Activated CD8-positive, alpha-beta T cell treated with anti-CD3 and anti-CD28 coated beads for 36 hours (primary cell): ENCODE measurements at regions of chr3 and their contacts with region 1.

Region 1: DNA sequence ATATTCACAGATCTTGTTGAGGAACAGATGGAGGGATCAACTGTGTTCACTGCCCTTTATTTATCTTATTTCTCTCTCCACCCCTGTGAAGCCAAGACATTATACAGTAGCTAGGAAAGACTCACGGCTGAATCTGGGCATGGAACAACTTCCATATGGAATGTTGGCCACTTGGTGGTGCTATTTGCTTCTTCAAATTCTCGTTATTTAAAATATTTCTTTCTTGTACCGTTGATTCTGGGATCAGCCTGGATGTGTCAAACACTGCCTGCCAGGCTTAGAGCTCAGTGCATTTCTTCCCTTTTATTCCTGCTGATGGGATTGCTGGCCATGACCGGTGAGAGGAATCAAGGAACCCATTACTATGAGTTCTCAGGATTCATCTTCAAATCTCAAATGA is 17.5 kb upstream of the GASK1A start:
- DNase-seq: peak; percentile 45
- ATAC-seq: no peak
- H3K4me3 Mint-ChIP-seq: no peak overlapping the region
- H3K27ac Mint-ChIP-seq: no peak overlapping the region
- H3K4me1 Mint-ChIP-seq: peaks cover 19% of the 10 kb centered on the region
- H3K27me3 Mint-ChIP-seq: no peaks in the 10 kb centered on the region
- CTCF ChIP-seq: peak; percentile 70

Region 2: DNA sequence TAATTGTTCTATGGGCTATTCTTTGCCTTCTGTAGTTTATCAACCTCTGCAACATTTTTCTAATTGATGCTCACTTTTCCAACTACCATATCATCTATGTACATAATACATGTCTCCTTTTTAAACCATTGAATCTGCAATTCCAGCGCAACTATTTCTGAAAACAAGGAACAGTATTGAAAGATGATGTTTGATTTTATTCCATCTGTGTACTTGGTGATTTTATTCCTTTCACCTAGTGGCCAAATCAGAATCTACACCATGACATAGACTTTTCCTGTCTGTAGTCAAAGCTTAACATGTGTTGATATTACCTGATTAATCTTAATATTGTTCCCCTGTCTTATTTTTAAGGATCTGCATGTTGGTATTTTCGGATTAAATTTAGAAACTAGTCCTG is 348.2 kb before region 1 on chr3:
- CTCF ChIA-PET with region 1: no interaction called
- POLR2A ChIA-PET with region 1: no interaction called
- intact Hi-C with region 1: no loop called
- DNase-seq: no peak
- ATAC-seq: no peak
- H3K4me3 Mint-ChIP-seq: no peak overlapping the region
- H3K27ac Mint-ChIP-seq: peak overlapping the region; percentile 8
- H3K4me1 Mint-ChIP-seq: peaks cover 55% of the 10 kb centered on the region
- H3K27me3 Mint-ChIP-seq: no peaks in the 10 kb centered on the region
- CTCF ChIP-seq: peak; percentile 30

Region 3: DNA sequence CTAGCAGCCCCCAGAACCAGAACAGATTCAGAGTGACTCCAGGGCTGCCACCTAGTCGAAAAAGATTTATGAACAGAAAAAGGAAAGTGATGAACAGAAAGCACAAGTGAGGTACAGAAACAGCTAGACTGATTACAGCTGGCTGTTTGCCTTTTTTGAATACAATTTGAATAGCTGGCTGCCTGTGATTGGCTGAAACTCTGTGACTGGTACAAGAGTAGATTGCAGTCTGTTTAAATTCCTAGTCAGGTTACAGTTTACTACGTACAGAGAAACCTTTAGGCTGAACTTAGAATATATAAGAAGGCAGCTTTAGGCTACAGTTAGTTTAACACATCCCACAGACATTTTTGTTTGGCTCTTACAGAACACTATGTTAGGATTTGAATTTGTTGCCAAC is 198.6 kb before region 1 on chr3:
- CTCF ChIA-PET with region 1: no interaction called
- POLR2A ChIA-PET with region 1: no interaction called
- intact Hi-C with region 1: no loop called
- DNase-seq: no peak
- ATAC-seq: peak; percentile 27
- H3K4me3 Mint-ChIP-seq: no peak overlapping the region
- H3K27ac Mint-ChIP-seq: no peak overlapping the region
- H3K4me1 Mint-ChIP-seq: no peaks in the 10 kb centered on the region
- H3K27me3 Mint-ChIP-seq: peaks cover 2% of the 10 kb centered on the region
- CTCF ChIP-seq: no peak

Region 4: GRCh38 chr3:42778644-42779043 is 183.0 kb before region 1 on chr3:
- CTCF ChIA-PET with region 1: no interaction called
- POLR2A ChIA-PET with region 1: no interaction called
- intact Hi-C with region 1: no loop called
- DNase-seq: no peak
- ATAC-seq: no peak
- H3K4me3 Mint-ChIP-seq: no peak overlapping the region
- H3K27ac Mint-ChIP-seq: no peak overlapping the region
- H3K4me1 Mint-ChIP-seq: no peaks in the 10 kb centered on the region
- H3K27me3 Mint-ChIP-seq: no peaks in the 10 kb centered on the region
- CTCF ChIP-seq: no peak

Region 5: DNA sequence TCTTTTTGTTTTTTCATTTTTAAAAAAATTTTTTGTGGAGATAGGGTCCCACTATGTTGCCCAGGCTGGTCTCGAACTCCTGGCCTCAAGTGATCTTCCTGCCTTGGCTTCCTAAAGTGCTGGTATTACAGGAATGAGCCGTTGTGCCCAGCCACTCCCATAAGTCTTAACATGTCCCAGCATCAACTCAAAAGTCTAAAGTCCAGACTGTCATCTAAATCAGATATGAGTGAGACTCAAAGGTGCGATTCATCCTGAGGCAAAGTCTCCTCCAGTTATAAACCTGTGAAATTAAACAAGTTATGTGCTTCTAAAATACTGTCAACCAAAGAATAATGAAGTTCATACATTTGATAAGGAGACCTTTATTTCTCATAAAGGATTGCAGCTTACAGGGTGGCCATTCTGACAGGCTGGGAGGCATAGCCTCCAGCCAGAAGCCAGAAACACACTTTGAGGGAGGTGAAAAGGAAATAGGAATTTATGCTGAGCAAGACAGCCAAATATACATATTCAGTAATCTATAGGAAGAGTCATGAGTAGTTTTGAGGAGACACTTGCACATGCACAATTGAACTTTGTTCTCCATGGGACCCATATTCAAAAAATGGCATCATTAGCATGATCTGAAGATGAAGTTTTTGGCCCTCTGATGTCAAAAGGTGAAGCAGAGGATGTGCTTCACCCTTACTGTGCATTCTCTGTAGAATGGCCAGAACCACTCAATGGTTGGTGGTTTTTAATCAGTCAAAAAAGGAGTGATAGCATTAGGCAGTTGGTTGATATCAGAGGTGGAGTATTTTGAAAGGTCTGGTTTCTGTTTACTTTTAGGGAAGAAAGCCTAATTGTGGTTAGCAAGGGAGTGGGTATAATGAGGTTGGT is 66.7 kb before region 1 on chr3:
- CTCF ChIA-PET with region 1: no interaction called
- POLR2A ChIA-PET with region 1: no interaction called
- intact Hi-C with region 1: no loop called
- DNase-seq: no peak
- ATAC-seq: peak; percentile 37
- H3K4me3 Mint-ChIP-seq: no peak overlapping the region
- H3K27ac Mint-ChIP-seq: no peak overlapping the region
- H3K4me1 Mint-ChIP-seq: peaks cover 5% of the 10 kb centered on the region
- H3K27me3 Mint-ChIP-seq: peaks cover 4% of the 10 kb centered on the region
- CTCF ChIP-seq: no peak

Region 6: DNA sequence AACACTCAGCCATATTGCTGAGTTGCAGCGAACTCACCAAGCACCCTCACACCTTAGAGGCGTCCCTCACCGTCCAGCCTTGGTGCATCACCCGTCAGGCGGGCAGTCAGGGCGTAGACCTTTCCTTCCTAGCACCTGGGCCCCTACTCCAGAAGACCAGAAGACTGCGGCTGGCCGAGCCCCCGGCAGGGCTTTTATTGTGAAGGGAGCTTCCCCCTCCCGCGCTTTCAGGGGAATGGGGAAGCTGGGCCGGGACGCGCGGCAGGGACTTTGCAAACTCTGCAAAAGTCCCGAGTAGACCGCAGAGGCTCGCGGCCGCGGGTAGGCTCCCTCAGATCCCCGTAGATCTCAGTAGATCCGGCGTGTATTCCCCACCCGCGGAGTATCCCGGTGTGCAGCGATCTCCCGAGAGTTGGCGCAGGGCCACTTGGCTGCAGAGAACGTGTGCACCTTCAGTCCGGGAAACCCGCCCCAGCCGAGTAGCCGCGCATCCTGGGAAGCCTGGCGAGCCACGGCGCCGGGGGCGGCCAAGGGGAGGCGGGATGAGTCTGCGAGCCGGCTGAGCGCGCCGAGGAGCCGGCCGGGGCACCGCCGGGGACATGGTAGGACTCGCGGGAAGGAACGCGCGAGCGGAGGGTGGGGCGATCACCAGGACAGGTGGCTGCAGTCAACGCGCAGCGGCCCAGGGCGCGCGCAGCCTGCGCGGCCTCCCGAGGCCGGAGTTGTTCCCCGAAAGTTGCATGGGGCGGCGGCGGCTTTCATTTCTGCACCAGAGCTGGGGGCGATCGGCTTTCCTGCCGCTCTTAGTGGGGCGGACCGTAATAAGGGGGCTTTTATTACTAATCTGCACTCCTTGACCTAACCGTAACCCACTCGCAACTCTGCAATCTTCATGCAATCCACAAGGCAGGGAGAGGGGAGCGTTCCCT is 17.7 kb after region 1 on chr3 and contains the start of gene GASK1A:
- CTCF ChIA-PET with region 1: interaction called, 26 read pairs
- POLR2A ChIA-PET with region 1: no interaction called
- intact Hi-C with region 1: no loop called
- DNase-seq: peak; percentile 40
- ATAC-seq: peak; percentile 65
- H3K4me3 Mint-ChIP-seq: peak within 1 kb of the TSS; percentile 64
- H3K27ac Mint-ChIP-seq: no peak within 1 kb of the TSS
- H3K4me1 Mint-ChIP-seq: peaks cover 4% of the 10 kb centered on the region
- H3K27me3 Mint-ChIP-seq: peaks cover 24% of the 10 kb centered on the region
- CTCF ChIP-seq: no peak
- total RNA-seq, gene GASK1A: 0.11 TPM in 1 of 2 experiments, not detected in the other

Region 7: DNA sequence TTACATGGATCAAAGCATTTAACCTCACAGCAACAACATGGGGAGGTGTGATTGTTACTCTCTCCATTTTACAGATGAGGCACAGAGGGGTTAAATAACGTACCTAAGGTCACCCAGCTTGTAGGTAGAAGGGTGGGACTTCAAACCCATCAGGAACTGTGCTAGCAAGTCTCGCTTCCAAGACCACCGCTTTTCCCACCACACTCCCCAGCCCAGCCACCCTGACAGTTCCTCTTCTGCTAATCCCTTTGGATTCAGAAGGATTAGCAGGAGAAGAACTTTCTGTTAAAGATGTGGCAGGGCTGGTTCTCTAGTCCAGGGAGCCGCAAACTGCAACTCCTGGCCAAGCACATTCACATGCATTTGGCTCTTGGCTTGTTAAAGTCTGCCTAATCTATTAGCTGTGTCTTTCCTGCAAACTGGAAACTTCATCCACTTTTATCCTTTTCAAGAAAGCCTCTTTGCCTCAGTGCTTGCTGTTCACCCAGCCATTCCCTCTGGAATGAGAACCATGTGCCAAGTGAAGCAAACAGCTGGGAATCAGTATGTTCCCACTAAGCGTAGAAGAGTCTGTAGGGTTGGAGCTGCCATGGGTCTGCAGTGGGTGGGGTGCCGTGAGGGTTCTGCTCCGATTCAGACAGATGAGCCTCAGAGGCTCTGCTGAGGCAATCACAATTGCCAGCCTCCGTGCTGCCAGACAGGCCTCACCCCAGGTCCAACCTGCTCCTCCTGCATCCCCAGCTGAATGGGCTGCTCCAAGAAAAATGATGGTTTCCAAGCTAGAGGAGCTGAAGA is 99.7 kb after region 1 on chr3:
- CTCF ChIA-PET with region 1: interaction called, 22 read pairs
- POLR2A ChIA-PET with region 1: no interaction called
- intact Hi-C with region 1: no loop called
- DNase-seq: no peak
- ATAC-seq: no peak
- H3K4me3 Mint-ChIP-seq: no peak overlapping the region
- H3K27ac Mint-ChIP-seq: no peak overlapping the region
- H3K4me1 Mint-ChIP-seq: peaks cover 21% of the 10 kb centered on the region
- H3K27me3 Mint-ChIP-seq: no peaks in the 10 kb centered on the region
- CTCF ChIP-seq: no peak

Region 8: DNA sequence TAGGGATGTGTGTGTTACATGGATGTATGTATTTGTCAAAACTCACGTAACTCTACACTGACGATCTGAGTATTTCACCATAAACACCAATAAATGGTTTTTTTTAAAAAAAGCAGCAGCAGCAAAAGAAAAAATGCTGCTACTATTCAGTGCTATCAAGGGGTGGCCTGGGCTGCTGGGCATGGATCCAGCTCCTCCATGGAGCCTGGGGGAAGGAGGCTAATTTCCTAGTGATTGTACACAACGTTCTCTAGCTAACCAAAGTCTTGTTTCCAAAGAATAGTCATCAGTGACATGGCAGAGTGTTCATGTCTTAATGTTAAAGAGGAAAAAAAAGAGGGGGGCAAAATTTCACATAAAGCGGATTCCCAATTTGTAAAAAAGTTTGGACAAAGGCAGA is 115.2 kb after region 1 on chr3:
- CTCF ChIA-PET with region 1: interaction called, 29 read pairs
- POLR2A ChIA-PET with region 1: no interaction called
- intact Hi-C with region 1: loop called (anchors 10 kb)
- DNase-seq: no peak
- ATAC-seq: no peak
- H3K4me3 Mint-ChIP-seq: no peak overlapping the region
- H3K27ac Mint-ChIP-seq: no peak overlapping the region
- H3K4me1 Mint-ChIP-seq: peaks cover 3% of the 10 kb centered on the region
- H3K27me3 Mint-ChIP-seq: no peaks in the 10 kb centered on the region
- CTCF ChIP-seq: no peak

Region 9: DNA sequence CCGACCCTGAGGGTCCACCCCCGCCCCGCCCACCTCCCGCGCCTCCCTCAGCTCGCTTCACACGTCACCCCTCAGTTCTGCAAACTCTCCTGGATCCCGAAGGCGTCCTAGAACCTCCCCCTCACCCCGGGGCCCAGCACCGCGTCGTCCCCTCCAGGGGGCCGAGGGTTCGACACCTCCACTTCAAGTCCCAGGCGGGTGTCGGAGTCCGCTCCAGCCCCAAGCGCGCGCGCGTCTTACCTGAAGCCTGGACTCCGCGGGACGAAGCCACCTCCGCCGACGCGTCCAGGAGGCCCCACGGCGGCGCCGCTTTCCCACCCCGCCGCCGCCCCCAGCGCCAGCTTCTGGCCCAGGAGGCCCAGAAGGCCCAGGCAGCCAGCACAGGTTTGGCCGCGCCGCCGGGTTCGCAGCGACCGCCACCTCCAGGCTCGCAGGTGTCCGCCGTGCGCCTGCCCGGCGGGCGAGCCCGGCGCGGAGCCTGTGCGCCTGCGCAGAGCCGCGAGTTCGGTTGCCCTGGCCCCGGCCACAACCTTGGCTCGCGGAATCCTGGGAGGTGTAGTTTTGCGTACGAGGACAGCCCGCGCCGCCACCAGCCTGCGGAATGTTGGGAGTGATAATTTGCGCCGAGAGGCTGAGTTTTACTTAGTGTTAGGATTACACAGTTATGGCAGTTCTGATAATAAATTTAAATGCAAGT is 144.1 kb after region 1 on chr3 and contains the start of gene POMGNT2:
- CTCF ChIA-PET with region 1: interaction called, 13 read pairs
- POLR2A ChIA-PET with region 1: no interaction called
- intact Hi-C with region 1: no loop called
- DNase-seq: peak; percentile 89
- ATAC-seq: peak; percentile 97
- H3K4me3 Mint-ChIP-seq: peak within 1 kb of the TSS; percentile 74
- H3K27ac Mint-ChIP-seq: peak within 1 kb of the TSS; percentile 50
- H3K4me1 Mint-ChIP-seq: peaks cover 23% of the 10 kb centered on the region
- H3K27me3 Mint-ChIP-seq: no peaks in the 10 kb centered on the region
- CTCF ChIP-seq: no peak
- total RNA-seq, gene POMGNT2: 11.9 to 12.0 TPM

Region 10: DNA sequence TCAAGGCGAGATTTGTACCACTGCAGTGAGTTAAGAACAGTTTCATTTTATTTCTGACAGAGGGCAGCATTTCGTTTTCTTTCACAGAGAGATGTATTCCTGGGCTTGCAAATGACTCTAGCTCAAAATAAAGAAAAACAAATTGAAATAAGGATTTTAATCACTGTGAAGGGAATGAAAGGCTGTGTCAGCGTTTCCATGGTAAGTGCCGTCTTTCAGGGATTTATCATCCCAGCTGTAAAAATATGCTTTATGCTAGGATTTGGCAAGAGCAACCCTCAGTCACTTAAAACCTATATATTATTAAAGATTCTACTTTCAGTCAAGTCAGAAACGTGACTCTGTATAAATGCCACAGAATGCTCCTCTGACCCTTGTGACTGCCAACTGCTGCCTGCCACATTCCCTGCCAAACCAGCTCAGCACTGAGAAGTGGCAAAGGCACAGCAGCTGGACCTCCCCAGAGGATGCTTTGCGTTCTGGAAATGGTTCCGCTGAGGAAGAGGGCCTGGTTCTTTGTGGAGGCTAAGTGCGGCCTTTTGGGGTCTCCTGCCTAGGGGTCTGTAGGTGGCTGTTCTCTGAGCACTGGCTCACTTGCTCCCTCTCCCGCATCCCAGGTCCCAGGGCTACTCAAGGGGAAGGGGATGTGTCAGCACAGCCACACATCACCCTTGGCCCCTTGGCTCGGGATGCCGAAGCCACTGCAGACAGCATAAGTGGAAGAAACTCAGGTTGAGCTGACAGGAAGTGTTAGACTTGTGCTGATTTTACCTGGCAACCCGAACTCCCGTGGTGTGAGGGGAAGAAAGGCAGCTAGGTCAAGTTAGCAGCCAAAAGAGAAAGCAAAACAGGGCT is 200.8 kb after region 1 on chr3:
- CTCF ChIA-PET with region 1: interaction called, 27 read pairs
- POLR2A ChIA-PET with region 1: no interaction called
- intact Hi-C with region 1: no loop called
- DNase-seq: peak; percentile 49
- ATAC-seq: peak; percentile 75
- H3K4me3 Mint-ChIP-seq: peak overlapping the region; percentile 65
- H3K27ac Mint-ChIP-seq: peak overlapping the region; percentile 96
- H3K4me1 Mint-ChIP-seq: peaks cover 20% of the 10 kb centered on the region
- H3K27me3 Mint-ChIP-seq: no peaks in the 10 kb centered on the region
- CTCF ChIP-seq: peak; percentile 58

Region 11: GRCh38 chr3:43503067-43503728 is 541.6 kb after region 1 on chr3:
- CTCF ChIA-PET with region 1: interaction called, 13 read pairs
- POLR2A ChIA-PET with region 1: no interaction called
- intact Hi-C with region 1: no loop called
- DNase-seq: no peak
- ATAC-seq: peak; percentile 31
- H3K4me3 Mint-ChIP-seq: no peak overlapping the region
- H3K27ac Mint-ChIP-seq: peak overlapping the region; percentile 58
- H3K4me1 Mint-ChIP-seq: peaks cover 64% of the 10 kb centered on the region
- H3K27me3 Mint-ChIP-seq: no peaks in the 10 kb centered on the region
- CTCF ChIP-seq: peak; percentile 62